Panc1 (cell line): ENCODE measurements at regions of chr6 and their contacts with region 1.

Region 1: DNA sequence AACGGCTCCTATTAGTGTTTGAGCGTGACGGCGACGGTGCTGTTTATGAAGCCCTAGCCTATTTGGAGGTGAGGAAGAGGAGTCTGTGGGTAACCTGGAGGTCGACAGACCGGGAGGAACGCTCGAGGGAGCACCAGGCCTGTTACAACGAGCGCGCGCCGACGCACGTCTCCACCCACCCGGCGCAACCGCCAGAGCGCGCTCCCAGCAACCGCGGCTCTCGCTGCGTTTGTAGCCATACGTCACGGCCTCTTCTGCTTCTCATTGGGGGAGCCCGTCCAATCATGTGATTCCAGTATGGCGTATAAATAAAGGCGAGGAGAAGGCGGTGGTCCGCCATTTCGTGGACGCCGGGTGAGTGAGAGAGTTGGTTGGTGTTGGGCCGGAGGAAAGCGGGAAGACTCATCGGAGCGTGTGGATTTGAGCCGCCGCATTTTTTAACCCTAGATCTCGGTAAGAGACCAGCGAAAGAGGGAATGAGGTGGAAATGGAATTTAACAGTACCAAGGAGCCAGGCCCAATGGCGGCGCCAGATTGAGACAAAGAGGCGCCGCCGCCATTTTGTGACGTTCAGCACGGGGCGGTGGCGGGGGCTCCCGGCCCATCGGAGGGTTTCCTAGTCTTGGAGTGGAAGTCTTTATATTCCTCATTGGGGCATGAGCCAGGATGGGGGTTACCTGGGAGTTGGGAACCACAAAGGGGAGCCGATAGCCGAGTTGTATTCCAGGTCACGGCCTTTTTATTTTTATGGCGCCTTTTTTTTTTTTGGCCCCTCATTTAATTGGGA is at the start of gene SRSF3:
- DNase-seq: peak; percentile 85
- ATAC-seq: peak; percentile 97
- H3K4me3 ChIP-seq: peak within 1 kb of the TSS; percentile 98 to 99
- H3K27ac ChIP-seq: peak within 1 kb of the TSS; percentile 99
- H3K4me1 ChIP-seq: peaks cover 18% of the 10 kb centered on the region
- H3K27me3 ChIP-seq: no peaks in the 10 kb centered on the region
- CTCF ChIP-seq: no peak
- total RNA-seq, gene SRSF3: 356 TPM

Region 2: GRCh38 chr6:36514554-36515456 is 79.4 kb before region 1 on chr6:
- CTCF ChIA-PET with region 1: no interaction called
- POLR2A ChIA-PET with region 1: no interaction called
- in situ Hi-C with region 1: no loop called
- intact Hi-C with region 1: no loop called
- DNase-seq: no peak
- ATAC-seq: no peak
- H3K4me3 ChIP-seq: no peak overlapping the region
- H3K27ac ChIP-seq: no peak overlapping the region
- H3K4me1 ChIP-seq: no peaks in the 10 kb centered on the region
- H3K27me3 ChIP-seq: no peaks in the 10 kb centered on the region
- CTCF ChIP-seq: no peak

Region 3: GRCh38 chr6:36546920-36547645 is 47.1 kb before region 1 on chr6 and contains the start of gene STK38:
- CTCF ChIA-PET with region 1: no interaction called
- POLR2A ChIA-PET with region 1: interaction called, 17 read pairs
- in situ Hi-C with region 1: no loop called
- intact Hi-C with region 1: loop called (anchors 2 kb)
- DNase-seq: no peak
- ATAC-seq: peak; percentile 97
- H3K4me3 ChIP-seq: peak within 1 kb of the TSS; percentile 64 to 98
- H3K27ac ChIP-seq: peak within 1 kb of the TSS; percentile 87
- H3K4me1 ChIP-seq: peaks cover 10% of the 10 kb centered on the region
- H3K27me3 ChIP-seq: no peaks in the 10 kb centered on the region
- CTCF ChIP-seq: no peak; the same call in 1 of the 2 replicates
- total RNA-seq, gene STK38: 44.7 TPM

Region 4: GRCh38 chr6:36559011-36559793 is 35.0 kb before region 1 on chr6:
- CTCF ChIA-PET with region 1: no interaction called
- POLR2A ChIA-PET with region 1: interaction called, 10 read pairs
- in situ Hi-C with region 1: no loop called
- intact Hi-C with region 1: no loop called
- DNase-seq: no peak
- ATAC-seq: no peak
- H3K4me3 ChIP-seq: no peak overlapping the region
- H3K27ac ChIP-seq: no peak overlapping the region
- H3K4me1 ChIP-seq: no peaks in the 10 kb centered on the region
- H3K27me3 ChIP-seq: no peaks in the 10 kb centered on the region
- CTCF ChIP-seq: no peak

Region 5: DNA sequence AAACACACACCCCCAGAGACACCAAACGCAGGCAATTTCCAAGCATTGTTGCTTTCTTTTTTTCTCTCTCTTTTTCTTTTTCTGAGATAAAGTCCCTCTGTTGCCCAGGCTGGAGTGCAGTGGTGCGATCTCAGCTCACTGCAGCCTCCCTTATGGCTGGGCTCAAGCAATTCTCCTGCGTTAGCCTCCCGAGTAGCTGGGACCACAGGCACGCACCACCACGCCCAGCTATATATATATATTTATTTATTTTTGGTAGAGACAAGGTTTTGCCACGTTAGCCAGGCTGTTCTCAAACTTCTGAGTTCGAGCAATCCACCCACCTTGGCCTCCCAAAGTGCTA is 14.1 kb before region 1 on chr6:
- CTCF ChIA-PET with region 1: no interaction called
- POLR2A ChIA-PET with region 1: interaction called, 11 read pairs
- in situ Hi-C with region 1: no loop called
- intact Hi-C with region 1: no loop called
- DNase-seq: no peak
- ATAC-seq: peak; percentile 35; the same call in 1 of the 2 replicates
- H3K4me3 ChIP-seq: peak overlapping the region in 1 of 2 experiments; percentile 18; a peak in 1 of 4 replicates
- H3K27ac ChIP-seq: peak overlapping the region; percentile 26; the same call in 1 of the 2 replicates
- H3K4me1 ChIP-seq: peaks cover 12% of the 10 kb centered on the region
- H3K27me3 ChIP-seq: no peaks in the 10 kb centered on the region
- CTCF ChIP-seq: no peak

Region 6: GRCh38 chr6:36739947-36740817 is 146.0 kb after region 1 on chr6:
- CTCF ChIA-PET with region 1: no interaction called
- POLR2A ChIA-PET with region 1: interaction called, 12 read pairs
- in situ Hi-C with region 1: no loop called
- intact Hi-C with region 1: no loop called
- DNase-seq: no peak
- ATAC-seq: no peak
- H3K4me3 ChIP-seq: no peak overlapping the region
- H3K27ac ChIP-seq: no peak overlapping the region
- H3K4me1 ChIP-seq: peaks cover 4% of the 10 kb centered on the region
- H3K27me3 ChIP-seq: no peaks in the 10 kb centered on the region
- CTCF ChIP-seq: no peak

Region 7: DNA sequence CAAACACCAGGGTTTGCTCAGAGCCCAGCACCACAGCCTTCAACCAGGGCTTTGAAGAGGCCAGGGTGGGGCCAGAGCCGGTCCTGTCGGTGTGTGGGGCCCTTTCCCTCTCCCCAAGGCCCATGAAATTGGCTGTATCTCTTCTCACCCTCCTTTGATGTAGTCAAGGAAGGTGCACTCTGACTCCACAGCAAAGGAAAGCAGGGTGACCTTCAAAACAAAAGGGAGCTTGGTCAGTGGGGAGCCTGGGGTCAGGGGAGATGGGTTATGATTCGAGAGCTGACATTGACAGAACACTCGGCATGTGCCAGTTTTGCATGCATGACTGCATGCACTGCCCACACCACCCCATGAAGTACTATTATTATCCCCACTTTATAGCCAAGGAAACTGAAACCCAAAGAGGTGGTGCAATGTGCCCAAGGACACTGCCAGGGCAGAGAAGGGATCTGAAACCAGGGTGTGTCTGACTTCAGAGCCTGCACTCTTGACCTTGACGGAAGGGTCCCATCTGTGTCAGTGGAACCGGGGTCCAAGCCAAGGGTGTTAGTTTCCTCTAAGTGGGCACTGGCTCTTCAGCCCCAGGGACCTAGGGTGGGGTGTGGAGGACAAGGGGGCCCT is 158.8 kb after region 1 on chr6:
- CTCF ChIA-PET with region 1: no interaction called
- POLR2A ChIA-PET with region 1: no interaction called
- in situ Hi-C with region 1: no loop called
- intact Hi-C with region 1: no loop called
- DNase-seq: no peak
- ATAC-seq: no peak
- H3K4me3 ChIP-seq: no peak overlapping the region
- H3K27ac ChIP-seq: no peak overlapping the region
- H3K4me1 ChIP-seq: peaks cover 6% of the 10 kb centered on the region
- H3K27me3 ChIP-seq: no peaks in the 10 kb centered on the region
- CTCF ChIP-seq: no peak

Region 8: GRCh38 chr6:37005061-37005810 is 411.0 kb after region 1 on chr6 and contains the start of gene FGD2:
- CTCF ChIA-PET with region 1: no interaction called
- POLR2A ChIA-PET with region 1: no interaction called
- in situ Hi-C with region 1: no loop called
- intact Hi-C with region 1: no loop called
- DNase-seq: no peak
- ATAC-seq: 0 out of 2 replicates have a peak, but pooled peaks have one; percentile 11
- H3K4me3 ChIP-seq: no peak within 1 kb of the TSS
- H3K27ac ChIP-seq: no peak within 1 kb of the TSS
- H3K4me1 ChIP-seq: no peaks in the 10 kb centered on the region
- H3K27me3 ChIP-seq: no peaks in the 10 kb centered on the region
- CTCF ChIP-seq: no peak
- total RNA-seq, gene FGD2: 0.10 TPM